B cell (primary cell): ENCODE measurements at regions of chr10 and their contacts with region 1.

Region 1: GRCh38 chr10:6300106-6300783 is 97.5 kb downstream of the PFKFB3 start:
- DNase-seq: peak; percentile 86
- ATAC-seq: peak; percentile 85
- H3K4me3 ChIP-seq: peak overlapping the region in 4 of 5 experiments; percentile 0 to 49 (median 22)
- H3K4me3 Mint-ChIP-seq: peak overlapping the region; percentile 75
- H3K27ac ChIP-seq: peak overlapping the region; percentile 70 to 75
- H3K27ac Mint-ChIP-seq: peak overlapping the region; percentile 87
- H3K4me1 ChIP-seq: peaks cover 39 to 74% of the 10 kb centered on the region in 2 donors
- H3K4me1 Mint-ChIP-seq: peaks cover 67% of the 10 kb centered on the region
- H3K27me3 ChIP-seq: no peaks in the 10 kb centered on the region
- H3K27me3 Mint-ChIP-seq: no peaks in the 10 kb centered on the region
- CTCF ChIP-seq: no peak

Region 2: DNA sequence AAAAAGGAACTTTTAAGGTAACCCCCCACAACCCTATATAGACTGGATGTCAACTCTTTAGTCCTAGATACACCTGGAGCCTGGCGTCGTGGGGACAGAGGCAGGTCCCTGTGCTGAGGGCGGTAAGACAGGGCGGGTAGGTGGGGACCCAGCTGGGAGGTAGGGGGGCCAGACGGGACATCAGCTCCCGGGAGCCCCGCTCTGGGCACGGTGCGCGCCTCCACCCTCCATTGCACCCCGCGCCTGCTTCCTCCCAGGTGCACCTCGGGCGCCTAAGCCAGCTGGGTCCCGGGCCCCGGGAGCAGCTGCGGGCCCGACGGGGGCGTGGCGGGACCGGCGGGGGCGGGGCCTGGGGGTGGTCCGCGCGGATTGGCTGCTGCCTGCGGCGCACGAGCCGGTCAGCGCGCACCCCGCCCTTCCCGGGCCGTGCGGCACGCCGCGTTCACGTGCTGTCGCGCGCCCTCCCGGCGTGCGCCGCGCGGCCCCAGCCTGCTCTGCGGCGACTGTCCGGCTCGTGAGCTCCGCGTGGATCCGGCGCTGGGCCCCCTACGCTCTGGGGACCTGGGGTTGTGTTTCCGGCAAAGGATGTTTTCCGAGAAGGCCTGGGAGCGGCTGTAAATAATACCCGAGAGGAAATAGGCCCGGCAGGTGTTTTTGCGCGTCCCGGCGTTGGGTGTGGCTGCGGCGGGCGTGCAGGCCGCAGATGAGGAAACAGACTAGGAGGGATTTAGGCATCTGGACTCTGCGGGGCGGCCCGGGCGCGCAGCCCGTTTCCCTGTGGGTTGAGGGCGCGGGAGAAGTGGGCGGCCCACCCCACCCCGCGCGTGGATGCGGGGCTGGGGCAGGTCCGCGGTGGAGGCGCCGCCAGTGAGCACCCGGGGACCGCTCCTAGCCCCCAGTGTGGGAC is 136.6 kb before region 1 on chr10:
- CTCF ChIA-PET with region 1: no interaction called
- POLR2A ChIA-PET with region 1: interaction called, 10 read pairs
- intact Hi-C with region 1: no loop called
- DNase-seq: peak; percentile 95
- ATAC-seq: peak; percentile 96
- H3K4me3 ChIP-seq: peak overlapping the region in 4 of 5 experiments; percentile 69 to 84 (median 72)
- H3K4me3 Mint-ChIP-seq: peak overlapping the region; percentile 97
- H3K27ac ChIP-seq: peak overlapping the region; percentile 89 to 96
- H3K27ac Mint-ChIP-seq: peak overlapping the region; percentile 98
- H3K4me1 ChIP-seq: peaks cover 16 to 19% of the 10 kb centered on the region in 2 donors
- H3K4me1 Mint-ChIP-seq: peaks cover 39% of the 10 kb centered on the region
- H3K27me3 ChIP-seq: no peaks in the 10 kb centered on the region
- H3K27me3 Mint-ChIP-seq: no peaks in the 10 kb centered on the region
- CTCF ChIP-seq: no peak

Region 3: GRCh38 chr10:6275022-6275997 is 24.9 kb before region 1 on chr10:
- CTCF ChIA-PET with region 1: no interaction called
- POLR2A ChIA-PET with region 1: interaction called, 4 read pairs
- intact Hi-C with region 1: loop called (anchors 1 kb)
- DNase-seq: peak; percentile 71
- ATAC-seq: peak; percentile 84
- H3K4me3 ChIP-seq: peak overlapping the region in 4 of 5 experiments; percentile 32 to 54 (median 37)
- H3K4me3 Mint-ChIP-seq: peak overlapping the region; percentile 86
- H3K27ac ChIP-seq: peak overlapping the region in 1 of 2 donors; percentile 54
- H3K27ac Mint-ChIP-seq: peak overlapping the region; percentile 90
- H3K4me1 ChIP-seq: peaks cover 4 to 22% of the 10 kb centered on the region in 2 donors
- H3K4me1 Mint-ChIP-seq: peaks cover 28% of the 10 kb centered on the region
- H3K27me3 ChIP-seq: peaks cover 0 to 5% (median 0%) of the 10 kb centered on the region in 4 experiments
- H3K27me3 Mint-ChIP-seq: no peaks in the 10 kb centered on the region
- CTCF ChIP-seq: no peak

Region 4: DNA sequence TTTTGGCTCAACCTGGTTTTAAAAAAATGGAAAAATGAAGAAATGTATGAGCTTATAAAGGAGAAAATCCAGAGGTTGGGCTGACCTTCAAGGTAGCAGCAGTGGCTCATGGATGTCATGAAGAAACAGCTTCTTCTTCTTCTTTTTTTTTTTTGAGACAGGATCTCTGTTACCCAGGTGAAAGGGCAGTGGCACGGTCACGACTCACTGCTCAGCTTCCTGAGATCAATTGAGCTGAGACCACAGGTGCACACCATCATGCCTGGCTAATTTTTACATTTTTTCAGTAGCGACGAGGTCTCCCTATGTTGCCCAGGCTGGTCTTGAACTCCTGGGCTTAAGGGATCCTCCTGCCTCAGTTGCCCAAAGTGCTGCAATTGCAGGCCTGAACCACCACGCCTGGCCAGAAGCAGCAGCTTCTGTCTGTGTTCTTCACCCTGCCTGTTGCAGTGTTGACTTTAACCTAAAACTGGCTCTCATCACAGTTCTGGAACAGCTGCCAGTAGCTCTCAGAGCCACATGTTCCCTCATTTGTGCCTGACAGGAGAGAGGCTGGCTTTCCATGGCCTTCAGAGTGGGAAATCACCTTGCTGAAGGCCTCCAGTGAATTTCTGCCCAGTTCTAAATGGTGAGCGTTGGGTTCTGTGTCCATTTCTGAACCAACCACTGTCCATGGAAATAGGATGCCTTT is 20.2 kb after region 1 on chr10:
- CTCF ChIA-PET with region 1: interaction called, 8 read pairs
- POLR2A ChIA-PET with region 1: interaction called, 6 read pairs
- intact Hi-C with region 1: loop called (anchors 1 kb)
- DNase-seq: peak; percentile 83
- ATAC-seq: peak; percentile 93
- H3K4me3 ChIP-seq: no peak overlapping the region
- H3K4me3 Mint-ChIP-seq: no peak overlapping the region
- H3K27ac ChIP-seq: no peak overlapping the region
- H3K27ac Mint-ChIP-seq: peak overlapping the region; percentile 84
- H3K4me1 ChIP-seq: peaks cover 38 to 51% of the 10 kb centered on the region in 2 donors
- H3K4me1 Mint-ChIP-seq: peaks cover 34% of the 10 kb centered on the region
- H3K27me3 ChIP-seq: no peaks in the 10 kb centered on the region
- H3K27me3 Mint-ChIP-seq: no peaks in the 10 kb centered on the region
- CTCF ChIP-seq: no peak

Region 5: DNA sequence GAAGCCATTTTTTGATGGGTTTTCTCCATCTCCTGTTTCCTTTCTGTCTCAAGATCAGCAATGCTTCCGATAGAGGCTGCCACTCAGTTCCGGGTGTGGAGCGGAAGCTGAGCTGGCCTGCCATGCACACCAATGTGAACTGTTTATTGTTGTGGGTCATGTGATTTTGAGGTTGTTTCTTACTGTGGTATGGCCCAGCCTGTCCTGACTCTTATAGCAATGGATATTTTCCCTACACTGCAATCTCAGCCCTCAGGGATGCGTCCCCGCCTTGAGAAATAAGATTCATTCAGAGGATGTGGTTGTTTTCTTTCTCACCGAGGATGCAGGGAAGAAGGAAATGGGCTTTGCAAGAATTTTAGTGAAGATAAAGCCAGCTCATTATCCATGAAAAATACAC is 37.1 kb after region 1 on chr10:
- CTCF ChIA-PET with region 1: no interaction called
- POLR2A ChIA-PET with region 1: no interaction called
- intact Hi-C with region 1: no loop called
- DNase-seq: no peak
- ATAC-seq: no peak
- H3K4me3 ChIP-seq: no peak overlapping the region
- H3K4me3 Mint-ChIP-seq: no peak overlapping the region
- H3K27ac ChIP-seq: no peak overlapping the region
- H3K27ac Mint-ChIP-seq: no peak overlapping the region
- H3K4me1 ChIP-seq: no peaks in the 10 kb centered on the region
- H3K4me1 Mint-ChIP-seq: no peaks in the 10 kb centered on the region
- H3K27me3 ChIP-seq: no peaks in the 10 kb centered on the region
- H3K27me3 Mint-ChIP-seq: no peaks in the 10 kb centered on the region
- CTCF ChIP-seq: no peak

Region 6: DNA sequence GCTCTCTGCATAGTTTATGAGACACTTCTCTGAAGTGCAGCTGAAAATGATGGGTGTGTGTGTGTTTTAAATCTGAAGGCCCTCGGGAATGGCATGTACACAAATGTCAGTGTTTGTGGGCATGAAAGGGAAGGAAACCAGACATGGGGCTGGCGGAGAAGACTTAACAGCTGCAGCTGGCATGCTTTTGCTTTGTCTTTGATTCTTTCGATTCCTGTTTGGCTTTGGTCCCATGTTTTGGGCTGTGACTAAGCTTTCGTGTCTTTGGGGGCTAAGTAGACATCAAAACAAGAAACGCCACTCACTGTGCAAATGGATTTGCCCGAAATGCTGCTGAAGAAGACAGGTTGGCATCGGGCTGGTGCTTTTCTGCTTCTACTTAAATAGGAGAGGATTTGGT is 81.8 kb after region 1 on chr10:
- CTCF ChIA-PET with region 1: interaction called, 4 read pairs
- POLR2A ChIA-PET with region 1: interaction called, 6 read pairs
- intact Hi-C with region 1: loop called (anchors 1 kb)
- DNase-seq: peak; percentile 69
- ATAC-seq: peak; percentile 95
- H3K4me3 ChIP-seq: peak overlapping the region in 2 of 5 experiments; percentile 6 to 24
- H3K4me3 Mint-ChIP-seq: peak overlapping the region; percentile 86
- H3K27ac ChIP-seq: no peak overlapping the region
- H3K27ac Mint-ChIP-seq: peak overlapping the region; percentile 83
- H3K4me1 ChIP-seq: peaks cover 16 to 21% of the 10 kb centered on the region in 2 donors
- H3K4me1 Mint-ChIP-seq: peaks cover 34% of the 10 kb centered on the region
- H3K27me3 ChIP-seq: no peaks in the 10 kb centered on the region
- H3K27me3 Mint-ChIP-seq: no peaks in the 10 kb centered on the region
- CTCF ChIP-seq: no peak